H1 (cell line): ENCODE measurements at regions of chr3 and their contacts with region 1.

Region 1: GRCh38 chr3:38154033-38154494 is 11.3 kb upstream of the OXSR1 start:
- DNase-seq: no peak
- H3K4me3 ChIP-seq: no peak overlapping the region
- H3K27ac ChIP-seq: no peak overlapping the region
- H3K4me1 ChIP-seq: no peaks in the 10 kb centered on the region
- H3K27me3 ChIP-seq: no peaks in the 10 kb centered on the region
- CTCF ChIP-seq: no peak
- EP300 ChIP-seq: no peak
- POLR2A ChIP-seq: no peak
- RAD21 ChIP-seq: no peak

Region 2: GRCh38 chr3:38136777-38137614 is 17.1 kb before region 1 on chr3 and contains the start of gene ACAA1:
- CTCF ChIA-PET with region 1: interaction called, 52 read pairs
- POLR2A ChIA-PET with region 1: interaction called, 4 read pairs
- DNase-seq: peak; percentile 96 to 99
- H3K4me3 ChIP-seq: peak within 1 kb of the TSS; percentile 73 to 87 (median 84)
- H3K27ac ChIP-seq: peak within 1 kb of the TSS; percentile 36; the same call in 1 of the 2 replicates
- H3K4me1 ChIP-seq: peaks cover 7 to 16% (median 13%) of the 10 kb centered on the region in 4 experiments
- H3K27me3 ChIP-seq: no peaks in the 10 kb centered on the region
- CTCF ChIP-seq: no peak
- EP300 ChIP-seq: no peak
- POLR2A ChIP-seq: peak in 1 of 2 experiments; percentile 89; a peak in 2 of 3 replicates
- RAD21 ChIP-seq: 0 out of 4 replicates have a peak, but pooled peaks of 1 of the 2 experiments have one; percentile 1
- total RNA-seq, gene ACAA1: 31.9 and 34.8 TPM in 2 replicates

Region 3: DNA sequence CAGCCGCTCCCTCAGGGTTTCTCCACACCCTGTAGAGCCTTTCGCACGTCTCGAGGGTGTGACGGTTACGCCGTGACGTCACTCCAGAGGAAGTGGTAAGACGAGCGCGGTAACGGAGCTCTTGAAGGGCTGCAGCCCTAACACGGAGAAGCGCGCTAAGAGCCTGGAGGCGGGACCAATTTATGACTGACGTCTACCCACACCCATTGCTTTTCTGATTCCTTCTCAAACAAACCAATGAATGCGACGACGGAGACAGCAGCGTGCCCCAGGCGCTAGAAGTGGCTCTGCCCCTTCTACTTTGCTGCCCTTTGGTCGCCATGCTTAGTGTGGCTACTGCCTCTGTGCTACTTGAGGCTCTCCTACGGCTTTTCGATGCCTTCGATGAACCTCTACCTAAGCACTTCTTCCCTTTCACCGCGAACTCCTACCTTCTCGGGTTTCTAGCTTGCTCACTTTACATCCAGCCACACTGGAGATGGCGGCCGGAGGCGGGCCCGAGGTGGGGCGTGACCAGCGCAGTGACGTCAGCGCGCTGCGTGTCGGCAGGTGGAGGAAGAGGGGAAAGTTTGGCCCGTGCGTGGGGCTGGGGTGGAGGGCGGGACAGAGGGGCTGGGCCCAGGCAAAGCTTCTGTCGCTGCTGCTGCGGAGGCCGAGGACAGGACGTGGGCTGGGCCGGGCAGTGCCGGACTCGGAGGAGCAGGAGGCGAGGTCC is 11.1 kb after region 1 on chr3 and contains the start of gene OXSR1:
- CTCF ChIA-PET with region 1: interaction called, 11 read pairs
- POLR2A ChIA-PET with region 1: interaction called, 11 read pairs
- DNase-seq: peak; percentile 92 to 98
- H3K4me3 ChIP-seq: peak within 1 kb of the TSS; percentile 75 to 90 (median 86)
- H3K27ac ChIP-seq: peak within 1 kb of the TSS; percentile 99
- H3K4me1 ChIP-seq: peaks cover 0 to 2% (median 0%) of the 10 kb centered on the region in 4 experiments; a peak in 3 of 7 replicates
- H3K27me3 ChIP-seq: no peaks in the 10 kb centered on the region
- CTCF ChIP-seq: no peak
- EP300 ChIP-seq: no peak
- POLR2A ChIP-seq: peak; percentile 77
- RAD21 ChIP-seq: no peak
- total RNA-seq, gene OXSR1: 45.5 and 47.0 TPM in 2 replicates